ENCODE measurements at regions of chr4 and their contacts with region 1.

Region 1: DNA sequence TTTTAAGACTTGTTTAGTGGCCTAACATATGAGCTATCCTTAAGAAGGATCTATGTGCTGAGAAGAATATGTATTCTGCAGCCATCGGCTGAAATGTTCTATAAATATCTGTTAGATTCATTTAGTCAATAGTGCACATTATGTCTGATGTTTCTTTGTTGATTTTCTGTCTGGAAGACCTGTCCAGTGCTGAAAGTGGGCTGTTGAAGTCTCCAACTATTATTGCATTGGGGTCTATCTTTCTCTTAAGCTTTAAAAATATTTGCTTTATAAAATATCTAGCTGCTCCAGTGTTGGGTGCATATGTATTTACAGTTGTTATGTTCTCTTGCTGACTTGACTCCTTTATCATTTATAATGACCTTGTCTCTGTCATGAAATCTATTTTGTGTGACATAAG is 9.4 kb upstream of the BLTP1 start:
- DNase-seq: no peak
- ATAC-seq: no peak
- H3K4me3 ChIP-seq: no peak overlapping the region
- H3K27ac ChIP-seq: no peak overlapping the region
- H3K4me1 ChIP-seq: no peaks in the 10 kb centered on the region
- H3K27me3 ChIP-seq: peaks cover 0 to 8% (median 0%) of the 10 kb centered on the region in 9 donors
- CTCF ChIP-seq: no peak
- POLR2A ChIP-seq: no peak

Region 2: GRCh38 chr4:121842862-121843261 is 299.8 kb before region 1 on chr4:
- intact Hi-C with region 1: no loop called
- DNase-seq: no peak
- ATAC-seq: no peak
- H3K4me3 ChIP-seq: no peak overlapping the region
- H3K27ac ChIP-seq: no peak overlapping the region
- H3K4me1 ChIP-seq: no peaks in the 10 kb centered on the region
- H3K27me3 ChIP-seq: no peaks in the 10 kb centered on the region
- CTCF ChIP-seq: no peak
- POLR2A ChIP-seq: no peak

Region 3: DNA sequence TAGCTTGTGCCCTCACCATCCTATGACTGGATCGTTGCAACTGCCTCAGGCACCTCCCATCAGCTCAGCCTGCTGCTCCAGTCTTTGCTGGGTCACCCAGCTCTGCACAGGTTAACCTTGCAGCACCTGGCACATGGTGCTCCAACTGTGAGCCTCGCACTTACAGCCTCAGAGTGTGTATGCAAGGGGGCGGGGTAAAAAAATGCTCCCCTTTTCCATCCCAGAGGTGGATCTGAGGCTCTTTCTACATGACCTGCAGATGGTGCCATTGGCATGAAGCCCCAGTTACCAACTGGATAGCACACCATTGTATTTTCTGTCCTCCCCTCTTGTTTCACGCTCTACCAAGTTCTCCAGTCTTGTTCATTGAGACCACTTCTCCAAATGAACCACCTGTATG is 144.7 kb before region 1 on chr4:
- intact Hi-C with region 1: loop called in 2 of 10 experiments (anchors 10 kb)
- DNase-seq: peak in 1 of 5 donors; percentile 25
- ATAC-seq: peak in 2 of 4 donors; percentile 59 to 66
- H3K4me3 ChIP-seq: no peak overlapping the region
- H3K27ac ChIP-seq: no peak overlapping the region
- H3K4me1 ChIP-seq: no peaks in the 10 kb centered on the region
- H3K27me3 ChIP-seq: peaks cover 0 to 7% (median 0%) of the 10 kb centered on the region in 9 donors
- CTCF ChIP-seq: peak in 10 of 12 donors; percentile 11 to 50 (median 36)
- POLR2A ChIP-seq: no peak

Region 4: GRCh38 chr4:122003335-122003734 is 139.4 kb before region 1 on chr4:
- intact Hi-C with region 1: loop called in 2 of 10 experiments (anchors 10 kb)
- DNase-seq: no peak
- ATAC-seq: peak in 1 of 4 donors; percentile 18
- H3K4me3 ChIP-seq: no peak overlapping the region
- H3K27ac ChIP-seq: no peak overlapping the region
- H3K4me1 ChIP-seq: no peaks in the 10 kb centered on the region
- H3K27me3 ChIP-seq: peaks cover 0 to 7% (median 0%) of the 10 kb centered on the region in 9 donors
- CTCF ChIP-seq: peak in 5 of 12 donors; percentile 8 to 23 (median 19)
- POLR2A ChIP-seq: no peak

Measured in heart left ventricle (tissue), 16 donors.